Heart right ventricle (tissue), 16 donors: ENCODE measurements at regions of chr19 and their contacts with region 1.

Region 1: GRCh38 chr19:1747285-1748114 is 5.8 kb upstream of the ONECUT3 start:
- DNase-seq: no peak
- ATAC-seq: no peak
- H3K4me3 ChIP-seq: no peak overlapping the region
- H3K27ac ChIP-seq: no peak overlapping the region
- H3K4me1 ChIP-seq: peaks cover 10 to 25% (median 19%) of the 10 kb centered on the region in 9 donors
- H3K27me3 ChIP-seq: peaks cover 47 to 94% (median 93%) of the 10 kb centered on the region in 7 donors
- CTCF ChIP-seq: no peak

Region 2: DNA sequence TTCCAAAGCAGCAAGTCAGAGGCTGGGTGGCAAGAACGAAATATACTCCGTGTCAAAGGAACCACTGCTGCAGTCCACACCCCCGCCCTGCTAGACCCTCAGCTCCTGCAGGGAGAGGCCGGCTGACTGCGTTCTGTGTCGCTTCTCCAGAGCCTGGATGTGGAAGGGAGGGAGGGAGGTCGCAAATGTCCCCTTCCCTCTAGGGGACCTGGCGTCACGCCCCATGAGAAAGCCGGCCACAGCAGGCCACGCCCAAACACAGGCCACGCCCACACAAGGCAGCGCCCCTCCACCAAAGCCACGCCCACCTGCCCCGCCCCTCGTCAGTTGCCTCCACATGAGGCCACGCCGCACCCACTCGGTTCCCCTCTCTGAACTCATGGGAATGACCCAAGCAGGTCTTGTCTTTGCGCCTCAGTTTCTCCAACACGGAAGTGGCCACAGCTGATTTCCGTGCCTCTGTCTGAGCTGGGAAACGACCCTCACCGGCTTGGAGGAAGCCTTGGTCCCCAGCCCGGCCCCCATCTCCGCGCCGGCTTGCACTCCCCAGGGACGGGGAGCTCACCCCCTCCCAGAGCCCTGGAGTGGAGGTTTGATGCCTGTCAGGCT is 56.7 kb before region 1 on chr19:
- intact Hi-C with region 1: loop called in 1 of 10 experiments (anchors 10 kb)
- DNase-seq: no peak
- ATAC-seq: peak in 2 of 8 donors; percentile 31 to 48
- H3K4me3 ChIP-seq: no peak overlapping the region
- H3K27ac ChIP-seq: no peak overlapping the region
- H3K4me1 ChIP-seq: peaks cover 0 to 4% (median 0%) of the 10 kb centered on the region in 9 donors
- H3K27me3 ChIP-seq: peaks cover 11 to 83% (median 73%) of the 10 kb centered on the region in 7 donors
- CTCF ChIP-seq: no peak